MCF 10A (cell line): ENCODE measurements at regions of chr3 and their contacts with region 1.

Region 1: DNA sequence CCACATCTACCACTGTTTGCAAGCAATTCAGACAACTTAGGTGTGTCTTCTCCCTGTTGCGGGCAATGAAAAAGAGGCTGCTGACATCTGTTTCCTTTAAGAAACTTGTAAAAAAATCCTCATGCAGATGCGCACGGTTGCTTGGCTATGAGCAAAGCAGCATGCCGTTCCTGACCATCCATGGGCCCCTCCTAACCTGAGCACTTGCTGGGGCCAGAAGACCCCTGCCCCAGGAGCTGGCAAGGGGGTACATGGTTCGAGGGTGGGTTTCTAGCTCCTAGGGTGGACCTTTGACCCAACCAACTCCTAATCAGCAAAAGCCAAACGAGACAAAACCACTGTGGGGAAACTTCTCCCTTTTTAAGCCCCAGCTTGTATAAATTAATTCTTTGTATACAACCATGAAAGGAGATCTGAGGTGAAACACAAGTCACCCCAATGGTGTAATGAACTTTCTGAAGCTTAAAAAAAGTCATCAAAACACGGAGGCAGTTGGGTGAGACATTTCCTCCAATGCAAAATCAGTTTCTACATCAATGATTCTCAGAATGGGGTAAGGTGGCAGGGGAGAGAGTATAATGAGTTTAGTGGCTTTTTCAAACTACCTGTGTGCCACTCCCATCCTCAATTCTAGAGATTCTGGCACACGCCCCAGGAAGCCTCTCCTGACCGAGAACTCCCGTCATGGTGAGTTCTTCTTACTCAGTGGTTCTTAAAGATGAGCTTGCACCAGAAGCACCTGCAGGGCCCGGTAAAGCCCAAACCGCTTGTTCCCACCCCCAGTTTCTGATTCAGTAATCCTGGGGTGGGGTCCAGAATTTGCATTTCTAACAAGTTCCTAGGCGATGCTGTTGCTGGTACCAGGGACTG is 44.1 kb downstream of the CPN2 start:
- DNase-seq: no peak
- H3K4me3 Mint-ChIP-seq: no peak overlapping the region
- H3K27ac Mint-ChIP-seq: no peak overlapping the region
- H3K4me1 Mint-ChIP-seq: peaks cover 9% of the 10 kb centered on the region
- H3K27me3 Mint-ChIP-seq: no peaks in the 10 kb centered on the region
- CTCF ChIP-seq: no peak

Region 2: GRCh38 chr3:194141415-194142155 is 165.4 kb before region 1 on chr3:
- CTCF ChIA-PET with region 1: no interaction called
- POLR2A ChIA-PET with region 1: interaction called, 17 read pairs
- intact Hi-C with region 1: no loop called
- DNase-seq: peak; percentile 97
- H3K4me3 Mint-ChIP-seq: peak overlapping the region; percentile 59
- H3K27ac Mint-ChIP-seq: peak overlapping the region; percentile 94
- H3K4me1 Mint-ChIP-seq: peaks cover 26% of the 10 kb centered on the region
- H3K27me3 Mint-ChIP-seq: no peaks in the 10 kb centered on the region
- CTCF ChIP-seq: no peak